Caco-2 (cell line): ENCODE measurements at regions of chr19 and their contacts with region 1.

Region 1: DNA sequence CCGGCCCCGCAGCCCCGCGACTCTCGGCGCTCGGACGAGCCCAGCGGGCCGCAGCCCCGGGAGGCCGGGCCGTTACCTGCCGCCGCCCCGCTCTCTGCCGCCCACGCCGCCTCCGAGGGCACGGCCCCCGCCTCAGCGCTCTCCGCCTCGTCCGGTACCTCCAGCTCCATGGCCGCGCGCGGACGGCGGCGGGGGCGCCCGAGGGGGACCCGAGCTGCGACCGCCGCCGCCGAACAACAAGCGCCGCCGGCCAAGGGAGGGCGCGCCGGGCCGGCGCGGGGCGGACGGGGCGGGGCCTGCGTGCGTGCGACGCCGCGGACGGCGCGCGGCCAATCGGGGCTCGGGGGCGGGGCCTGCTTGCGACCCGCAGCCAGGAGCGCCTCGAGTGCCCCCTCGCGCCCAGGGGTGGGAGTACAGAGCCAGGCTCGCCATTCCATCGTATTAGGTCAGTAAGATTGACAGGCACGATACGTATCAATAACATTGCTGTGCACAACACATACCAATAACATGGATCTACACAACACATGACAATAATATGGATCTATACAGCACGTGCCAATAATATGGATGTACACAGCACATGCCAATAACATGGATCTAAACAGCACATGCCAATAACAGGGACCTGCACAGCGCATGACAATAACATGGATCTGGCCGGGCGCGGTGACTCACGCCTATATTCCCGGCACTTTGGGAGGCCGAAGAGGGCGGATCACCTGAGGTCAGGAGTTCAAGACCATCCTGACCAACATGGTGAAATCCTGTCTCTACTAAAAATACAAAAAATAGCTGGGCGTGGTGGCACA is at the start of gene PIP5K1C:
- DNase-seq: peak; percentile 82 to 94
- H3K4me3 ChIP-seq: peak within 1 kb of the TSS; percentile 81
- H3K4me3 Mint-ChIP-seq: peak within 1 kb of the TSS; percentile 72
- H3K27ac Mint-ChIP-seq: peak within 1 kb of the TSS; percentile 63
- H3K4me1 ChIP-seq: no peaks in the 10 kb centered on the region
- H3K4me1 Mint-ChIP-seq: no peaks in the 10 kb centered on the region
- H3K27me3 ChIP-seq: no peaks in the 10 kb centered on the region
- H3K27me3 Mint-ChIP-seq: no peaks in the 10 kb centered on the region
- CTCF ChIP-seq: peak; percentile 77 to 81
- total RNA-seq, gene PIP5K1C: 24.5 and 27.0 TPM in 2 replicates

Region 2: DNA sequence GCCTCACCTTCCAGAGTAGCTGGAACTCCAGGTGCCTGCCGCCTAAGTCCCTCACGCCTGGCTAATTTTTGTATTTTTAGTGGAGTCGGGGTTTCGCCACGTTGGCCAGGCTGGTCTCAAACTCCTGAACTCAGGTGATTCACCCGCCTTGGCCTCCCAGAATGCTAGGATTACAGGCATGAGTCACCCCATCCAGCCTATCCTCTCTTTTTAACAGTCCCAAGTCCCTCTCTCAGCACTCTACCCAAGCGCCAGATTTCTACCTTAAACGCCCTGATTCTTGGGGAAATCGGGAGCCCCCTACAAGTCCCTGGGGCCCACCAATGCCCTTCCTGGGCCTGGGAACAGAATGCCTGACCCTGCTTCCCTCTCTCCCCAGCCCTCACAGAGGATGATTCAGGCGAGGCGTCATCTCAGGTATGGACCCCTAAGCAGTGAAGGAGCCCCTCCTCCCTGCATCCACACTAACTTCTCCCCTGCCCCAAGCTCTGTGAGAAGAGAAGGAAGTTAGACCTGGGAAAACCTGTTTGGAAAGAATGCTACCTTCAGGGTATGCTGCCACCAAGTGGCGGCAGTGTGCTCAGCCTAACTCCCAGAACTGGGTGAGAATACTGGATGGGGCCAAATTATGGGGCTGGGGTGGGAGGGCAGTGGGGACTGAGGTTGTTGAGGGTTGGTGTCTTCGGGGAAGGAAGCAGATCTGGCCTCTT is 508.1 kb after region 1 on chr19:
- CTCF ChIA-PET with region 1: no interaction called
- POLR2A ChIA-PET with region 1: interaction called, 15 read pairs
- intact Hi-C with region 1: no loop called
- DNase-seq: peak in 1 of 2 experiments; percentile 62
- H3K4me3 ChIP-seq: no peak overlapping the region
- H3K4me3 Mint-ChIP-seq: no peak overlapping the region
- H3K27ac Mint-ChIP-seq: peak overlapping the region; percentile 32
- H3K4me1 ChIP-seq: no peaks in the 10 kb centered on the region
- H3K4me1 Mint-ChIP-seq: peaks cover 6% of the 10 kb centered on the region
- H3K27me3 ChIP-seq: no peaks in the 10 kb centered on the region
- H3K27me3 Mint-ChIP-seq: no peaks in the 10 kb centered on the region
- CTCF ChIP-seq: peak; percentile 26 to 56